Activated CD4-positive, alpha-beta T cell treated with anti-CD3 and anti-CD28 coated beads for 36 hours (primary cell): ENCODE measurements at regions of chr5 and their contacts with region 1.

Region 1: DNA sequence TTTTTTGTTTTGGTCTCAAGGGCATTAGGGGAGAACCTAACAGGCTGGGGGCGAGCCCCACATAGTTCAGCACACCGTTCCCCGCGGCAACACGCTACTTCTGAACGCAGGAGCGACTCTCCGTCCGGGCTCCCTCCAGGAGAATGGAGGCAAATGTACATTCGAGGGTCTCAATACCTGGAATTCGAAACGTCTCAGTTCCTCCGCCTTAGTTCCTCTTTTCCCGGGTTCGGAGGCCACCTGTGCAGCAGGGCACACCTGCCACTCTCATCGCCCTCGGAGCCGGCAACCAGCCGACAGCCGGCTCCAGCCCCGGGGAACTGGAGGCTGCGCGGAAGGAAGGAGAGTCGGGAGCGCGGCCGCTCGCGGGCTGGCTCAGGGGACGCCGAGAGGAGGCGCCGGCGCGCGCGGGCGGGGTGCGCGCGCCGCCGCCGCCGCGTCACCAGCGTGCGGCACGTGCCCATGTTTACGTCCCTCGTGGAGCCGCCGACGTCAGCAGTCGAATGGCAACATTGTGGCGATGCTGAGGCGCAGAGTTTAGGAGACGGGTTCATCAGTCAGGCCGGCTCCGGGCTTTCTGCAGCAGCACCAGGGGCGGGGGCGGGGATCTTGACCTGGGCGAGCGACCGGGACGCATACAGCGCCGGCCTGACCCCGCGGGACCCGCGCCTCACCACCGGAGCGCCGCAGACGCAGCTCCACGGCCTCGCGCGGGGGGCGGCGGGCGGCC is at the start of gene JMY:
- DNase-seq: peak; percentile 93
- ATAC-seq: peak; percentile 78
- H3K4me3 Mint-ChIP-seq: peak within 1 kb of the TSS; percentile 97
- H3K27ac Mint-ChIP-seq: peak within 1 kb of the TSS; percentile 99
- H3K4me1 Mint-ChIP-seq: peaks cover 25% of the 10 kb centered on the region
- H3K27me3 Mint-ChIP-seq: no peaks in the 10 kb centered on the region
- total RNA-seq, gene JMY: 7.3 to 7.4 TPM

Region 2: DNA sequence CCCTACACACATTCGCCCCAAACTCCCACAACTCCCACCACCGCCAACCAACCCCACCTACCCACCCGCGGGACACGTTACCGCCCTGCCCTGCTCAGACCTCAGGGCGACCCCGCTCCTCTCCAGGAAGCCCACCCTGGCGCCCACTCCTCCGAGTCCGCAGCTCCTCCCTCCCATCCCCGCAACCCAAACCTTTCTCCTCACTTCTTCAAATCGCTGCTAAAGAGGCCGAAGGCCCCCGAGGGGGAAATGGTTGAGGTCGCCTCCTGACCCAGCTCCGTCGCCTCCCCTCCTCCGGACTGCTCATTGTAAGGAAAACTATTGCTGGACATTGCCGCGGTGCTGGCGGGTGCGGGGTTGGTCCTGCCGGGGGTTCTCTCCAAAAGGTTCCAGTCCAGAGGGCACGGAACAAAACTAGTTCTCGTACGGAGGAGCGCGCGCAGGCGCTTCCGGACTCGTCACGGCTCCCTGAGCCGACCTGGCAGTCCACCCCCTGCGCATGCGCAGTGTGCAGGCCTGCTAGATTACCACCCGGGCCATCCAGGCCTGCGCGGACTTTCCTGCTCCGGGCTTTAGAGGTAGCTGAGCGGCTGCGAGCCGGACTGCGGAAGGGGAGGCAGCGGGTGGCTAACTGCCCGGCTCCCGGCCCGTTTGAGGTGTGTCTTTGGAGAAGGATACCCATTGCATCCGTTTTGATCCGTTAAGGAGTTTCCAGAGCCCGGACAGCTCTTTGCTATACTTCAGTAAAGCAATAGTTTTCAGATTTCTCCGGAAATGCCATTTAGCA is 941.4 kb before region 1 on chr5 and contains the start of gene AP3B1:
- CTCF ChIA-PET with region 1: no interaction called
- POLR2A ChIA-PET with region 1: no interaction called
- intact Hi-C with region 1: loop called in 1 of 2 experiments (anchors 1 kb)
- DNase-seq: peak; percentile 99
- ATAC-seq: peak; percentile 94
- H3K4me3 Mint-ChIP-seq: peak within 1 kb of the TSS; percentile 88
- H3K27ac Mint-ChIP-seq: peak within 1 kb of the TSS; percentile 99
- H3K4me1 Mint-ChIP-seq: peaks cover 33% of the 10 kb centered on the region
- H3K27me3 Mint-ChIP-seq: no peaks in the 10 kb centered on the region
- total RNA-seq, gene AP3B1: 41.2 to 55.7 TPM

Region 3: DNA sequence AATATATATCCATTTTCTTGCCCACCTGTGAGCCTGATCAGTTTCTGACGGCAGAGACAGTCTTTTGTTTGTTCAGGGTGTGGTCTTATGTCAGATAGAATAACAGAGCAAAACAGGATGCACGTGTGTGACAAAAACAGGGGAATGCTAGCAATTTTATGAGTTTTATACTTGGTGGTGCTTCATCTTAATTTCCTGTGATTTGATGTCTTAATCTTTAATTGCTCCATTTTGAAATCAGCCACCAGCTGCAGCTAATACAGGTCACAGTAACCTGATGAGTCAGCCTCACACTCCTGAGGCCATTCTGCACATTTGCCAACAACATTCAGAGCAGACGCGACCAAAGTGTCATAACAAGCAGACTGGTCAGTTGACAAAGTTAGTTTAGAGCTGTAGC is 42.2 kb before region 1 on chr5:
- CTCF ChIA-PET with region 1: no interaction called
- POLR2A ChIA-PET with region 1: no interaction called
- intact Hi-C with region 1: no loop called
- DNase-seq: no peak
- ATAC-seq: no peak
- H3K4me3 Mint-ChIP-seq: no peak overlapping the region
- H3K27ac Mint-ChIP-seq: no peak overlapping the region
- H3K4me1 Mint-ChIP-seq: peaks cover 4% of the 10 kb centered on the region
- H3K27me3 Mint-ChIP-seq: no peaks in the 10 kb centered on the region

Region 4: DNA sequence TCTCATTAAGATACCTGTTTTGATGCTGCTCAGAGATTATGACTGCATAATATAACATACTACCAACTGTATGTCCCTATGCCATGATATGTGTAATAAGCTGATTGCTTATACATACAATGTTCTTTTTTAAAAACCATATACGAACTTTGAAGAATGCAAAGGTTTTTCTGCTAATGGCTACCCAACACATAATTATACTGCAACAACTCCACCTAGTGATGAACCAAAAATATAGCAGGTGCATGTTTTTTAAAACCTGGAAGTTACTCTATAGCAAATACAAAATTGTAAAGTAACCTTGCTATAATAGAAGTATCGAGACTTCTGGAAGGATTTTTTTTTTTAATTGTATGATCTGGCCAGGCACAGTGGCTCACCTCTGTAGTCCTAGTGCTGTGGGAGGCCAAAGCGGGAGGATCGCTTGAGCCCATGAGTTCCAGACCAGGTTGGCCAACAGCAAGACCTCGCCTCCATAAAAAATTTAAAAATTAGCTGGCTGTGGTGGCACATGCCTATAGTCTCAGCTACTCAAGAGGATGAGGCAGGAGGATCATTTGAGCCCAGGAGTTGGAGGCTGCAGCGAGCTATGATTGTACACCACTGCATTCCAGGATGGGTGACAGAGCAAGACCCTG is 229.0 kb after region 1 on chr5:
- CTCF ChIA-PET with region 1: no interaction called
- POLR2A ChIA-PET with region 1: no interaction called
- intact Hi-C with region 1: loop called in 1 of 2 experiments (anchors 5 kb)
- DNase-seq: no peak
- ATAC-seq: peak; percentile 30
- H3K4me3 Mint-ChIP-seq: no peak overlapping the region
- H3K27ac Mint-ChIP-seq: no peak overlapping the region
- H3K4me1 Mint-ChIP-seq: no peaks in the 10 kb centered on the region
- H3K27me3 Mint-ChIP-seq: peaks cover 3% of the 10 kb centered on the region

Region 5: DNA sequence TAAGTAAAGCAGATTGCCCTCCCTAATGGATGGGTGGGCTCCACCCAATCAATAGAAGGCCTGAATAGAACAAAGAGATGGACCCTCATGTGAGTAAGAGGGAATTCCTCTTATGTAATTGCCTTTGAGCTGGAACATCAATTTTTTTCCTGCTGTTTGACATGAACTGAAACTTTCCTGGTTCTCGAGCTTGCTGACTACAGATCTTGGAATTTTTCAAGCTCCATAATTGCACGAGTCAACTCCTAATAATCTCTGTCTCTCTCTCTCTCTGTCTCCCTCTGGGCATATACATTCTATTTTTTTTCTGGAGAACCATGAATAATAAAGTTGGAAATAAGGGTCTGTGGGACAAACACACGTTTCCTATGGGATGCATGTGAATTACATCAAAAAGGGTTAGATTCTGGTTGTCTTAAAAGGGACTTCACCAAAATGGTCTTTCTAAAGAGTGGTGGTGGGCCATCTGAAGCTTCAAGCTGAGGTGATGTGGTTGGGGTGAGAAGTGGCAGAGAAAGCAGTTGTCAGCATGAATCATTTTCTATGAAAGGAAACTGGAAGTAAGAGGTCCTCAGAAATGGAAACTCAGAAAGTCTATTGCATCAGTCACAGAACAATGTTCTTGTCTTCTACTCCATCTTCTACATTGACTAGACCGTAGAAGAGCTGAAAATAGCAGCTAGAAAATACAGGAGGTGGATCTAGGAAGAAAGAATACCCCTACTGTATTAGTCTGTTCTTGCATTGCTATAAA is 325.1 kb after region 1 on chr5:
- CTCF ChIA-PET with region 1: no interaction called
- POLR2A ChIA-PET with region 1: no interaction called
- intact Hi-C with region 1: loop called in 1 of 2 experiments (anchors 1 kb)
- DNase-seq: peak; percentile 61
- ATAC-seq: peak; percentile 86
- H3K4me3 Mint-ChIP-seq: peak overlapping the region; percentile 34
- H3K27ac Mint-ChIP-seq: peak overlapping the region; percentile 99
- H3K4me1 Mint-ChIP-seq: peaks cover 44% of the 10 kb centered on the region
- H3K27me3 Mint-ChIP-seq: no peaks in the 10 kb centered on the region

Region 6: GRCh38 chr5:80246001-80246758 is 1010.4 kb after region 1 on chr5:
- CTCF ChIA-PET with region 1: no interaction called
- POLR2A ChIA-PET with region 1: no interaction called
- intact Hi-C with region 1: loop called in 1 of 2 experiments (anchors 5 kb)
- DNase-seq: no peak
- ATAC-seq: no peak
- H3K4me3 Mint-ChIP-seq: peak overlapping the region; percentile 41
- H3K27ac Mint-ChIP-seq: peak overlapping the region; percentile 72
- H3K4me1 Mint-ChIP-seq: peaks cover 62% of the 10 kb centered on the region
- H3K27me3 Mint-ChIP-seq: no peaks in the 10 kb centered on the region